OCI-LY7 (cell line): ENCODE measurements at regions of chr3 and their contacts with region 1.

Region 1: DNA sequence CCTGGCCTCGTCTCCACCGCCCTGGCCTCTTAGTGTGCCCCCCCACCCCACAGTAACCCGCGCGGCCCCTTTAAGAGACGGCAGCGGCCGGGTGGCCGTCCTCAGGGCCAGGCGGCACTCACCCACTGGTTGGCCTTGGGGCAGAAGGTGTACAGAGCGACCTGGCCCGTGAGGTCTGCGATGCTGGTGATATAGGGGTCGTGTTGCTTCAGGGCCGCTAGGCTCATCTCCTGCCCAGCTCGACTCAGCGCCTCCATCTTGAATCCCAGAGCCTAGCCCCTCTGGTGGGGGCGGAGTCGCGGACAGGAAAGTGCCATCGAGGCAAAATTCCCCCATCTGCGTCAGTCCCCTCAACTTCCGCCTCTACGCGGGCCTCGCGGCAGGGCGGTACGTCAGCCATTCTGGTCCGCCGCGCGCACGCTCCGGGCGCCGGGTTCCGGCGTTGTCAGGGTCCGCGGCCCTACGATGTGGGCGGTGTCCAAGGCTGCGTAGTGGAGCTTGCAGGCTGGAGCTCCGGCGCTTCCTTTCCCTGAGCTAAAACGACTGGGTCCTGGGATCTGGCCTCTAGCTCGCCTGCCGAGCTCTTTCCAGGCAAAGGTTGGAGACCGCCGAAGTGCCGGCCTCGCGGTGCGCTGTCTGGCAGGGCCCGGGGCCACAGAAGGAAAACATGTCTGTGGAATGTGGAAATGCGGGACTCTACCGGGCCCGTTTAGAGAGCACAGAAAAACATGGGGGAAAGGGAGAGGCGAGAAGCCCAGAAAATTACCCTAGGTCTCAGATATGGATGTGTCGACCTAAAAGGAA is at the start of gene DCP1A:
- DNase-seq: peak; percentile 98
- H3K4me3 ChIP-seq: peak within 1 kb of the TSS; percentile 97
- H3K27ac ChIP-seq: peak within 1 kb of the TSS; percentile 53
- H3K4me1 ChIP-seq: peaks cover 19% of the 10 kb centered on the region
- CTCF ChIP-seq: no peak
- total RNA-seq, gene DCP1A: 21.8 and 23.8 TPM in 2 replicates

Region 2: GRCh38 chr3:53114011-53114400 is 233.5 kb before region 1 on chr3:
- CTCF ChIA-PET with region 1: no interaction called
- POLR2A ChIA-PET with region 1: no interaction called
- intact Hi-C with region 1: loop called (anchors 2 kb)
- DNase-seq: peak; percentile 84
- H3K4me3 ChIP-seq: no peak overlapping the region
- H3K27ac ChIP-seq: no peak overlapping the region
- H3K4me1 ChIP-seq: peaks cover 3% of the 10 kb centered on the region
- CTCF ChIP-seq: peak; percentile 96

Region 3: GRCh38 chr3:53255775-53256703 is 91.4 kb before region 1 on chr3 and contains the start of gene TKT:
- CTCF ChIA-PET with region 1: interaction called, 3 read pairs
- POLR2A ChIA-PET with region 1: interaction called, 6 read pairs
- intact Hi-C with region 1: loop called (anchors 2 kb)
- DNase-seq: peak; percentile 90
- H3K4me3 ChIP-seq: peak within 1 kb of the TSS; percentile 95
- H3K27ac ChIP-seq: peak within 1 kb of the TSS; percentile 75
- H3K4me1 ChIP-seq: peaks cover 38% of the 10 kb centered on the region
- CTCF ChIP-seq: no peak
- total RNA-seq, gene TKT: 248 and 325 TPM in 2 replicates

Region 4: GRCh38 chr3:53293867-53294266 is 53.6 kb before region 1 on chr3:
- CTCF ChIA-PET with region 1: no interaction called
- POLR2A ChIA-PET with region 1: no interaction called
- intact Hi-C with region 1: loop called (anchors 5 kb)
- DNase-seq: no peak
- H3K4me3 ChIP-seq: no peak overlapping the region
- H3K27ac ChIP-seq: no peak overlapping the region
- H3K4me1 ChIP-seq: no peaks in the 10 kb centered on the region
- CTCF ChIP-seq: no peak

Region 5: GRCh38 chr3:53478166-53478830 is 130.8 kb after region 1 on chr3:
- CTCF ChIA-PET with region 1: no interaction called
- POLR2A ChIA-PET with region 1: no interaction called
- intact Hi-C with region 1: no loop called
- DNase-seq: no peak
- H3K4me3 ChIP-seq: no peak overlapping the region
- H3K27ac ChIP-seq: no peak overlapping the region
- H3K4me1 ChIP-seq: no peaks in the 10 kb centered on the region
- CTCF ChIP-seq: no peak

Region 6: DNA sequence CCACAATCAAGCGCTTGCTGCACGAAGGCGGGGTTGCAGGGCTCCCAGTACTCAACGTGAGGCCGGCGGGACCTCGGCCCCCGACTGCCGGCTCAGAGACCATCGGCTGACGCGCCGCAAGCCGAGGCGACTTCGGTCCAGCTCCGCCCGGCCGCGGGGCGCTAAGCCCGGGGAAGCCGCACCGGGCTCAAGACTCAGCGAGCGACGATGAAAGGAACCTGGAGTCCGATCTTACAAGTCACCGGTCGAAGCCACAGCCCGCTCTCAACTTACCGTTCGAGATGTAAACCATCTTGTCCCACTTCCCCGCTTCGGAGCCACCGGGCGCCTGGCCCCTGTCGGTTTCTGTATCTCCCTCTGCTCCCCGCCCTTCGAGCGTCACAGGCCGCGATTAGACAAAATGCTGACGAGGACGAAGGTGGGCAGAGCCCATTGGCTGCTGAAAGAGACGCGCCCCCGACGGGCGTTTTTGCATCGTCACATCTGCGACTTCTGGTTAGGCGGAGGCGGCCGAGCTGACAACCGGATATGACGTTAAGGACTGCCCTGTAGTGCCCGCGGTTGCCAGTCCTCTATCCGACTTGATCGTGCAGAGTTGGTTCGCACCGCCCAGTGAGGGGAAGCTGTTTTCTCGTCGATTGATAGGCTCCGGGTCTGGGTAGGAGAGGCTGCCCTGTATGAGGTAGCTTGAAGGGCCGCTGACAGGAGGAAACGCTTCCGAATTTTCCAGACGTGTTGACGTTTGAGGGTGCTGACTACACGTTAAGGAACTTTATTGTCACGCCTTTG is 544.2 kb after region 1 on chr3 and contains the start of gene SELENOK:
- CTCF ChIA-PET with region 1: no interaction called
- POLR2A ChIA-PET with region 1: no interaction called
- intact Hi-C with region 1: loop called (anchors 5 kb)
- DNase-seq: peak; percentile 99
- H3K4me3 ChIP-seq: peak within 1 kb of the TSS; percentile 92
- H3K27ac ChIP-seq: peak within 1 kb of the TSS; percentile 45
- H3K4me1 ChIP-seq: peaks cover 21% of the 10 kb centered on the region
- CTCF ChIP-seq: no peak
- total RNA-seq, gene SELENOK: 48.7 and 63.8 TPM in 2 replicates